GM12878 (cell line): ENCODE measurements at regions of chr19 and their contacts with region 1.

Region 1: DNA sequence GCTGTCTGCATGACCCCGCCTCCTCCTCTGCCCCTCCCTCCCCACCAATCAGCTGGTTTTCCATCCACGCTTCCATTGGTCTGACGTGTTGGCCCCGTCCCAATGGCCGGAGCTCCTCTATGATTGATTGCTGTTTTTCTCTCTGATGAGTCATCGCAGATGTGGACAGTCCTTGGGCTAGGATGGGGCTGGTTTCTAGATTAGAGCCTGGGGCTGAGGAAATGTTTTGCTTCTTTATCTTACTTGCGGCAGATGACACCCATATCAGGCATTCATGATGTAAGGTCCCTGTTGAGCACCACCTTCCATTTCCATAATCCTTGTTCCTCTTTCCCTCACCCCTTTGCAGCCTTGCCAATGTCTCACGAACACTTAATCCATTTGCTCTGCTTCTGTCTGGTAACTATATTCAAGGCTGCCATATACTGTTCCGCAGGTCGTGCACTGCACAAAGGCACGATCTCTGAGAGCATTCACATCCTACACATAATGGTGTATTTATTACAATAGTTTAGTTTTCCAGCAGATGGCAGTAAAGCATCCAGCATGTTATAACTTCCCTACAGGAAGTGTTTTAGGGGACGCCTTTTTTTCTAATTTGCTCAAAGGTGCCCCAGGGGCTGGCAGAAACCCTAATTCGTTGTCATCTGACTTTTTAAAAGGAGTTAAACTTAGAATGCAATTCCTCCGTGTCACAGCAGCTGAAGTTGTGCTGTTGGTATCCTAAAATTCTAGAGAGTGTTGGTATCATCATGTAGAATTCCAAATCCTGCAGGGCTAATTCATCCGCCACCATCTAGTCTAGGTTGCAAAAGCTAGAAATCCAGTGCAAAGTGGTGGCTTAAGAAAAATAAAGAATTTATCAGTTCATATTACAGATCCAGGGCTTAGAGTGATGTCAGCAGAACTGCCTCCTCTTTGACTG is 73.5 kb downstream of the MAP4K1 start:
- DNase-seq: peak; percentile 64
- ATAC-seq: peak; percentile 93
- H3K4me3 ChIP-seq: peak overlapping the region; percentile 25; the same call in 1 of the 2 replicates
- H3K27ac ChIP-seq: no peak overlapping the region
- H3K4me1 ChIP-seq: peaks cover 9% of the 10 kb centered on the region; the same call in 1 of the 2 replicates
- H3K27me3 ChIP-seq: no peaks in the 10 kb centered on the region
- CTCF ChIP-seq: peak; percentile 52 to 81 (median 69); a peak in 5 of 6 replicates
- EP300 ChIP-seq: no peak
- POLR2A ChIP-seq: no peak
- RAD21 ChIP-seq: peak; percentile 91

Region 2: GRCh38 chr19:38441657-38442348 is 102.5 kb before region 1 on chr19:
- CTCF ChIA-PET with region 1: no interaction called
- POLR2A ChIA-PET with region 1: no interaction called
- RAD21 ChIA-PET with region 1: no interaction called
- SMC1A ChIA-PET with region 1: no interaction called
- in situ Hi-C with region 1: no loop called
- intact Hi-C with region 1: no loop called
- DNase-seq: no peak
- ATAC-seq: peak; percentile 71
- H3K4me3 ChIP-seq: no peak overlapping the region
- H3K27ac ChIP-seq: no peak overlapping the region
- H3K4me1 ChIP-seq: no peaks in the 10 kb centered on the region
- H3K27me3 ChIP-seq: no peaks in the 10 kb centered on the region
- CTCF ChIP-seq: peak; percentile 23 to 45 (median 29); a peak in 3 of 6 replicates
- EP300 ChIP-seq: no peak
- POLR2A ChIP-seq: no peak
- RAD21 ChIP-seq: peak; percentile 45; the same call in 1 of the 2 replicates

Region 3: DNA sequence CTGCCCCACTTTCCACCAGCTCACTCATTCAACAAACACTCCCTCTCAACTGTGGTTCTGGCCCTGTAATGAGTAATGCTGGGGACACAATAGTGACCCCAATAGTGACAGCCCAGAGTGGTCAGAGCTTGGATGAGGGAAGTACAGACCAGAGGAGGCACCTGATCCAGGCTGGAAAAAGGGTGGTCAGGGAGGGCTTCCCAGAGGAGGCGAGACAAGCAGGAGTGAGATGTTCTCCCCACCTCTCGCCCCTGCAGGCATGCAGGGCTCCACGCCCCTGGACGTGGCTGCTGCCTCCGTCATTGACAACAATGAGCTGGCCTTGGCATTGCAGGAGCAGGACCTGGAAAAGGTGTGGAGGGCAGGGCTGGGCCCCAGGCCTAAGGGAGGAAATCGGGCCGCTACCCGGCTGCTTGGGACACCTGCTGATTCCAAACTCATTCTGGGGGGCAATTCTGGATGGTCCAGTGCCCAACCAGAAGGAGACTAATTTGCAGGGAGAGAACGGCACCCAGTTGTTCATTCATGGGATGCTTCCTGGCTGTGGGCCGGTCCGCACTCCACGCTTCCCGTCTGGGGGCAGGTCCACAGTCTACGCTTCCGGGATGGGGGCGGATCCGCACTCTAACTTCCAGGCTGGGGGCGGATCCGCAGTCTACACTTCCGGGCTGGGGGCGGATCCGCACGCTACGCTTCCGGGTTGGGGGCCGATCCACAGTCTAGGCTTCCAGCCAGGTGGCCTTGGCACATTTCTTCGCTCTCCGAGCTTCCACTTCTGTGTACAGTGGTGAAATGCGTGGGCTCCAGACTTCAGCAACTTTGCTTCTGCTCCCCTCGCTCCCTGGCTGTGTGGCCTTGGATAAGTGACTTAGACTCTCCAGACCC is 47.5 kb before region 1 on chr19:
- CTCF ChIA-PET with region 1: no interaction called
- POLR2A ChIA-PET with region 1: no interaction called
- RAD21 ChIA-PET with region 1: no interaction called
- SMC1A ChIA-PET with region 1: no interaction called
- in situ Hi-C with region 1: no loop called
- intact Hi-C with region 1: no loop called
- DNase-seq: no peak
- ATAC-seq: no peak
- H3K4me3 ChIP-seq: no peak overlapping the region
- H3K27ac ChIP-seq: no peak overlapping the region
- H3K4me1 ChIP-seq: peaks cover 6% of the 10 kb centered on the region; the same call in 1 of the 2 replicates
- H3K27me3 ChIP-seq: no peaks in the 10 kb centered on the region
- CTCF ChIP-seq: no peak
- EP300 ChIP-seq: no peak
- POLR2A ChIP-seq: no peak
- RAD21 ChIP-seq: no peak

Region 4: GRCh38 chr19:38514812-38515633 is 29.3 kb before region 1 on chr19:
- CTCF ChIA-PET with region 1: interaction called, 12 read pairs
- POLR2A ChIA-PET with region 1: interaction called, 3 read pairs
- RAD21 ChIA-PET with region 1: interaction called, 5 read pairs
- SMC1A ChIA-PET with region 1: no interaction called
- in situ Hi-C with region 1: no loop called
- intact Hi-C with region 1: no loop called
- DNase-seq: no peak
- ATAC-seq: peak; percentile 96
- H3K4me3 ChIP-seq: no peak overlapping the region
- H3K27ac ChIP-seq: no peak overlapping the region
- H3K4me1 ChIP-seq: peaks cover 6% of the 10 kb centered on the region
- H3K27me3 ChIP-seq: no peaks in the 10 kb centered on the region
- CTCF ChIP-seq: peak; percentile 89 to 98 (median 90); a peak in 5 of 6 replicates
- EP300 ChIP-seq: no peak
- POLR2A ChIP-seq: no peak
- RAD21 ChIP-seq: peak; percentile 74

Region 5: GRCh38 chr19:38559428-38560401 is 15.4 kb after region 1 on chr19:
- CTCF ChIA-PET with region 1: interaction called, 27 read pairs
- POLR2A ChIA-PET with region 1: interaction called, 11 read pairs
- RAD21 ChIA-PET with region 1: interaction called, 8 read pairs
- SMC1A ChIA-PET with region 1: interaction called, 7 read pairs
- in situ Hi-C with region 1: no loop called
- intact Hi-C with region 1: no loop called
- DNase-seq: peak; percentile 99
- ATAC-seq: peak; percentile 81
- H3K4me3 ChIP-seq: no peak overlapping the region; the same call in 1 of the 2 replicates
- H3K27ac ChIP-seq: peak overlapping the region; percentile 70
- H3K4me1 ChIP-seq: peaks cover 53% of the 10 kb centered on the region
- H3K27me3 ChIP-seq: 0 out of 4 replicates have a peak, but pooled peaks cover 0 to under 1% of the 10 kb centered on the region in 2 experiments
- CTCF ChIP-seq: no peak
- EP300 ChIP-seq: peak; percentile 94 to 96
- POLR2A ChIP-seq: no peak
- RAD21 ChIP-seq: peak; percentile 19; the same call in 1 of the 2 replicates

Region 6: GRCh38 chr19:38583219-38583984 is 39.1 kb after region 1 on chr19:
- CTCF ChIA-PET with region 1: interaction called, 5 read pairs
- POLR2A ChIA-PET with region 1: no interaction called
- RAD21 ChIA-PET with region 1: interaction called, 4 read pairs
- SMC1A ChIA-PET with region 1: interaction called, 5 read pairs
- in situ Hi-C with region 1: no loop called
- intact Hi-C with region 1: loop called (anchors 1 kb)
- DNase-seq: peak; percentile 78
- ATAC-seq: peak; percentile 95
- H3K4me3 ChIP-seq: no peak overlapping the region
- H3K27ac ChIP-seq: peak overlapping the region; percentile 52
- H3K4me1 ChIP-seq: peaks cover 18% of the 10 kb centered on the region
- H3K27me3 ChIP-seq: no peaks in the 10 kb centered on the region
- CTCF ChIP-seq: no peak
- EP300 ChIP-seq: peak; percentile 47 to 51; a peak in 2 of 4 replicates
- POLR2A ChIP-seq: no peak
- RAD21 ChIP-seq: no peak

Region 7: GRCh38 chr19:38693380-38694223 is 149.3 kb after region 1 on chr19:
- CTCF ChIA-PET with region 1: no interaction called
- POLR2A ChIA-PET with region 1: no interaction called
- RAD21 ChIA-PET with region 1: no interaction called
- SMC1A ChIA-PET with region 1: no interaction called
- in situ Hi-C with region 1: no loop called
- intact Hi-C with region 1: no loop called
- DNase-seq: no peak
- ATAC-seq: no peak
- H3K4me3 ChIP-seq: 0 out of 2 replicates have a peak overlapping the region, but pooled peaks have one; percentile 36
- H3K27ac ChIP-seq: peak overlapping the region; percentile 64
- H3K4me1 ChIP-seq: peaks cover 48% of the 10 kb centered on the region
- H3K27me3 ChIP-seq: no peaks in the 10 kb centered on the region
- CTCF ChIP-seq: no peak
- EP300 ChIP-seq: no peak
- POLR2A ChIP-seq: no peak
- RAD21 ChIP-seq: no peak

Region 8: GRCh38 chr19:38831142-38831605 is 286.9 kb after region 1 on chr19:
- CTCF ChIA-PET with region 1: interaction called, 3 read pairs
- POLR2A ChIA-PET with region 1: no interaction called
- RAD21 ChIA-PET with region 1: no interaction called
- SMC1A ChIA-PET with region 1: no interaction called
- in situ Hi-C with region 1: no loop called
- intact Hi-C with region 1: loop called (anchors 10 kb)
- DNase-seq: no peak
- ATAC-seq: peak; percentile 91
- H3K4me3 ChIP-seq: peak overlapping the region; percentile 75
- H3K27ac ChIP-seq: peak overlapping the region; percentile 95
- H3K4me1 ChIP-seq: no peaks in the 10 kb centered on the region; the same call in 1 of the 2 replicates
- H3K27me3 ChIP-seq: no peaks in the 10 kb centered on the region
- CTCF ChIP-seq: no peak
- EP300 ChIP-seq: no peak
- POLR2A ChIP-seq: no peak
- RAD21 ChIP-seq: no peak